ENCODE measurements at regions of chr5 and their contacts with region 1.

Region 1: GRCh38 chr5:32076699-32077695 is 97.1 kb downstream of the GOLPH3 start:
- DNase-seq: peak; percentile 27
- ATAC-seq: peak; percentile 62; the same call in 2 of the 3 replicates
- H3K4me3 ChIP-seq: no peak overlapping the region
- H3K27ac ChIP-seq: no peak overlapping the region
- H3K4me1 ChIP-seq: no peaks in the 10 kb centered on the region
- H3K27me3 ChIP-seq: 0 out of 5 replicates have a peak, but pooled peaks cover 0 to 5% of the 10 kb centered on the region in 2 experiments
- CTCF ChIP-seq: peak; percentile 68
- EP300 ChIP-seq: no peak
- POLR2A ChIP-seq: no peak
- RAD21 ChIP-seq: peak; percentile 51

Region 2: GRCh38 chr5:31581498-31582099 is 495.4 kb before region 1 on chr5:
- CTCF ChIA-PET with region 1: interaction called, 10 read pairs
- POLR2A ChIA-PET with region 1: no interaction called
- in situ Hi-C with region 1: no loop called
- intact Hi-C with region 1: loop called (anchors 5 kb)
- DNase-seq: peak; percentile 10
- ATAC-seq: no peak
- H3K4me3 ChIP-seq: no peak overlapping the region
- H3K27ac ChIP-seq: no peak overlapping the region
- H3K4me1 ChIP-seq: no peaks in the 10 kb centered on the region
- H3K27me3 ChIP-seq: peaks cover 2 to 6% of the 10 kb centered on the region in 2 experiments; a peak in 2 of 5 replicates
- CTCF ChIP-seq: peak; percentile 42
- EP300 ChIP-seq: no peak
- POLR2A ChIP-seq: no peak
- RAD21 ChIP-seq: no peak

Region 3: GRCh38 chr5:31825518-31826068 is 251.4 kb before region 1 on chr5:
- CTCF ChIA-PET with region 1: interaction called, 20 read pairs
- POLR2A ChIA-PET with region 1: no interaction called
- in situ Hi-C with region 1: loop called (anchors 10 kb)
- intact Hi-C with region 1: loop called (anchors 1 kb)
- DNase-seq: peak; percentile 41
- ATAC-seq: peak; percentile 95
- H3K4me3 ChIP-seq: no peak overlapping the region
- H3K27ac ChIP-seq: no peak overlapping the region
- H3K4me1 ChIP-seq: no peaks in the 10 kb centered on the region
- H3K27me3 ChIP-seq: no peaks in the 10 kb centered on the region
- CTCF ChIP-seq: peak; percentile 67
- EP300 ChIP-seq: no peak
- POLR2A ChIP-seq: no peak
- RAD21 ChIP-seq: peak; percentile 39; the same call in 1 of the 2 replicates

Region 4: DNA sequence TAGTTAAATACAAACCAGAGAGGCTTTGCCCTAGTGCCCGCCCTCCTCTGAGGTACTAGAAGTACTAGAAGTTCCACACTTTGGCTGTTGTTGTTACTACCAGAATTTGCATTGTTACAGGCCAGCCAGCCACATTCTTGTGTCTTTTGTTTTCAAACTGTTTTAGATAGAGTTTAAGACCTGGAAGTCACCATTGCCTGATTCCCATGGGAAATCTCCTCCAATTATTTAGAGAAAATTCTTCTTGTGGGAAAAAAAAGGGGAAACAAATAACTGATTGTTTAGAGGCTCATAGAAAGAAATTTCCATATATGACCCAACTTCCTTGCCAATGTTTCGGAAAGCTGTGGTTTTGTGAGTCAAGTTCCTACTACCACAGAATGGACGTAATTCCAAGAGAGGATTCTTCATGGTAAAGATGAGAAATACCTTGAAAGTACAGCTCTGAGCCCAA is 155.1 kb before region 1 on chr5:
- CTCF ChIA-PET with region 1: no interaction called
- POLR2A ChIA-PET with region 1: no interaction called
- in situ Hi-C with region 1: loop called (anchors 5 kb)
- intact Hi-C with region 1: loop called (anchors 1 kb)
- DNase-seq: no peak
- ATAC-seq: no peak
- H3K4me3 ChIP-seq: no peak overlapping the region
- H3K27ac ChIP-seq: no peak overlapping the region
- H3K4me1 ChIP-seq: no peaks in the 10 kb centered on the region
- H3K27me3 ChIP-seq: peaks cover 1 to 8% of the 10 kb centered on the region in 2 experiments; a peak in 3 of 5 replicates
- CTCF ChIP-seq: no peak
- EP300 ChIP-seq: no peak
- POLR2A ChIP-seq: no peak
- RAD21 ChIP-seq: no peak

Region 5: GRCh38 chr5:31934156-31934555 is 142.8 kb before region 1 on chr5:
- CTCF ChIA-PET with region 1: interaction called, 9 read pairs
- POLR2A ChIA-PET with region 1: no interaction called
- in situ Hi-C with region 1: loop called (anchors 5 kb)
- intact Hi-C with region 1: loop called (anchors 1 kb)
- DNase-seq: no peak
- ATAC-seq: no peak
- H3K4me3 ChIP-seq: no peak overlapping the region
- H3K27ac ChIP-seq: no peak overlapping the region
- H3K4me1 ChIP-seq: no peaks in the 10 kb centered on the region
- H3K27me3 ChIP-seq: peaks cover 4 to 16% of the 10 kb centered on the region in 2 experiments; a peak in 3 of 5 replicates
- CTCF ChIP-seq: no peak
- EP300 ChIP-seq: no peak
- POLR2A ChIP-seq: no peak
- RAD21 ChIP-seq: no peak

Region 6: GRCh38 chr5:32017692-32018367 is 59.2 kb before region 1 on chr5:
- CTCF ChIA-PET with region 1: no interaction called
- POLR2A ChIA-PET with region 1: no interaction called
- in situ Hi-C with region 1: no loop called
- intact Hi-C with region 1: no loop called
- DNase-seq: no peak
- ATAC-seq: no peak; the same call in 2 of the 3 replicates
- H3K4me3 ChIP-seq: no peak overlapping the region
- H3K27ac ChIP-seq: no peak overlapping the region
- H3K4me1 ChIP-seq: no peaks in the 10 kb centered on the region
- H3K27me3 ChIP-seq: peaks cover 0 to 36% of the 10 kb centered on the region in 2 experiments; a peak in 2 of 5 replicates
- CTCF ChIP-seq: no peak
- EP300 ChIP-seq: no peak
- POLR2A ChIP-seq: no peak
- RAD21 ChIP-seq: no peak

Region 7: DNA sequence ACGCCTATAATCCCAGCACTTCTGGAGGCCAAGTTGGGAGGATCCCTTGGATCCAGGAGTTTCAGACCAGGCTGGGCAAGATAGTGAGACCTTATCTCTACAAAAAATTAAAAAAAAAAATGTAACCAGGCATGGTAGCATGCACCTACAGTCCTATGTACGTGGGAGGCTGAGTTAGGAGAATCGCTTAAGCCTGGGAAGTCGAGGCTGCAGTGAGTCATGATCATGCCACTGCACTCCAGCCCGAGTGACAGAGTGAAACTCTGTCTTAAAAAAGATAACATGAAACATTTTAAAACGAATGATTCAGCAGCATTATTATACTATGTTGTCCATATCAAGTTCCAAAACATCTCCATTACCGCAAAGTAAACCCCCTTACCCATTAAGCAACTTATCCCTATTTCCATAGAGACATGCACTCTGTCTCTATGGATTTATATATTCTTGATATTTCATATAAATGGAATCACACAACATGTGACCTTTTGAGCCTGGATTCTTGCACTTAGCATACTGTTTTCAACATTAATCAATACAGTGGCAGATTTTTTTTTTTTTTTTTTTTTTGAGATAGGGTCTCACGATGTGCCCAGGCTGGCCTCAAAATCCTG is 292.7 kb after region 1 on chr5:
- CTCF ChIA-PET with region 1: no interaction called
- POLR2A ChIA-PET with region 1: no interaction called
- in situ Hi-C with region 1: no loop called
- intact Hi-C with region 1: no loop called
- DNase-seq: no peak
- ATAC-seq: no peak
- H3K4me3 ChIP-seq: no peak overlapping the region
- H3K27ac ChIP-seq: peak overlapping the region; percentile 45
- H3K4me1 ChIP-seq: peaks cover 40% of the 10 kb centered on the region
- H3K27me3 ChIP-seq: no peaks in the 10 kb centered on the region
- CTCF ChIP-seq: no peak
- EP300 ChIP-seq: no peak
- POLR2A ChIP-seq: no peak
- RAD21 ChIP-seq: no peak

Measured in HepG2 (cell line).